ENCODE measurements at regions of chr1 and their contacts with region 1.

Region 1: DNA sequence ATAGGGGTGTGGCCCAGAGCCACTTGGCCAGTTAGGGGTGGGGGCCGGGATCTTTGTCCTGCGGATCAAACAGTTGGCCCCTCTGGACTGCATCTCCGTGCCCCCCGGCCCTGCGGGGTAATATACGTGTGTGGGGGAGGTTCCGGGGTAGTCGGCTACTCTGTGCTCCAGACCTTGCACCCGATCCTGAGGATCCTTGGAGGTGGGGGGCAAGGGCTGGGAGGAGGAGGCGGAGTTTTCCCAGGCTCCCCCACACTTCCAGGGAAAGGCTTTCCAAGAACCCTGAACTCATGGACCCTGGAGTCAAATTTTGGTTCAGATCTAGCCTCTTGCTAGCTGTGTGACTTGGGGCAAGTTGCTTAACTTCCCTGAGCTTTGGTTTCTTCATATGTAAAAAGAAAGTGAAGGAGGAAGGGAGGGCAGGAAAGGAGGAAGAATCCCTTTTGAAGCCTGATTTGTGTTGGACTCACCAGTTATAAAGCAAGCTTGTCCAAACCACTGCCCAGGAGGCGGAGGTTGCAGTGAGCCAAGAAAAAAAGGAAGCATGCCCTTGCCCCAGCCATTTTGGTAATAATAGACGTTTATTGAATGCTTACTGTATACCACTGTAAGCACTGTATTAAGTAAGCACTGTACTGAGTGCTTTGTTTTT is 686 bp downstream of the MIIP start:
- DNase-seq: no peak
- H3K4me3 Mint-ChIP-seq: peak overlapping the region; percentile 78
- H3K27ac Mint-ChIP-seq: peak overlapping the region; percentile 82
- H3K4me1 Mint-ChIP-seq: peaks cover 49% of the 10 kb centered on the region
- H3K27me3 Mint-ChIP-seq: no peaks in the 10 kb centered on the region

Region 2: DNA sequence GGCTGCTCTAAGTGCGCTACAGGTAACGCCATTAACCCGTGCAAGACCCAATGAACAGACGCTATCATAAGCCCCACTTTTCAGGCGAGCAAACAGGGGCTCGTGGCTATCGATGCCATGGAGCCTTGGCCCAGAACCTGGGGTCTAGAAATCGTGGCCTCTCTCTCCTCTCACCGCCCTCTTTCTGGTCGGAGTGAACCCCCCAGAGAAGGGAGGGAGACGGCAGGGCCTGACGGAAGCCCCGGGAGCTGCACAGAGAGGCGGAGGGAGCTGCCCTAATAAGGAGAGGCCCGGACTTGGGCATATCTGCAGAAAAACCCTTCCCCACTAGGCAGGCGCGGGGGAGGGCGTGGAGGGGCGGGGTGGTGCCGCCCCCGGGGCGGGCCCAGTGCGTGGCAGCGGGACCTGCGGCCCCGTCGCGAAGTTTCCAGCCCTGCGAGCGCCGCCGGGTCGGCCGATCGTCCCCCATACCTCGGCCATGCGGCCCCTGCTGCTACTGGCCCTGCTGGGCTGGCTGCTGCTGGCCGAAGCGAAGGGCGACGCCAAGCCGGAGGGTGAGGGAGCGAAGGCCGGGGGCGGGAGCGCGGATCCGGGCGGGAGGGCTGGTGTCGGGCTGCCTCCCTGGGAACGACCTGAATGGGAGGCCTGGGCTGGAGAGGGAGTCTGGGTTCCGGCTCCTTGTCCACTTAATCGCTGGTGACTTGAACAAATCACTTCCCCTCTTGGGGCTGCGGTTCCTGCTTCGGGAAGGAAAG is 85.5 kb before region 1 on chr1 and contains the start of gene PLOD1:
- CTCF ChIA-PET with region 1: no interaction called
- POLR2A ChIA-PET with region 1: no interaction called
- DNase-seq: peak; percentile 91
- H3K4me3 Mint-ChIP-seq: peak within 1 kb of the TSS; percentile 80
- H3K27ac Mint-ChIP-seq: peak within 1 kb of the TSS; percentile 59
- H3K4me1 Mint-ChIP-seq: peaks cover 10% of the 10 kb centered on the region
- H3K27me3 Mint-ChIP-seq: no peaks in the 10 kb centered on the region
- total RNA-seq, gene PLOD1: 15.7 to 16.5 TPM

Region 3: DNA sequence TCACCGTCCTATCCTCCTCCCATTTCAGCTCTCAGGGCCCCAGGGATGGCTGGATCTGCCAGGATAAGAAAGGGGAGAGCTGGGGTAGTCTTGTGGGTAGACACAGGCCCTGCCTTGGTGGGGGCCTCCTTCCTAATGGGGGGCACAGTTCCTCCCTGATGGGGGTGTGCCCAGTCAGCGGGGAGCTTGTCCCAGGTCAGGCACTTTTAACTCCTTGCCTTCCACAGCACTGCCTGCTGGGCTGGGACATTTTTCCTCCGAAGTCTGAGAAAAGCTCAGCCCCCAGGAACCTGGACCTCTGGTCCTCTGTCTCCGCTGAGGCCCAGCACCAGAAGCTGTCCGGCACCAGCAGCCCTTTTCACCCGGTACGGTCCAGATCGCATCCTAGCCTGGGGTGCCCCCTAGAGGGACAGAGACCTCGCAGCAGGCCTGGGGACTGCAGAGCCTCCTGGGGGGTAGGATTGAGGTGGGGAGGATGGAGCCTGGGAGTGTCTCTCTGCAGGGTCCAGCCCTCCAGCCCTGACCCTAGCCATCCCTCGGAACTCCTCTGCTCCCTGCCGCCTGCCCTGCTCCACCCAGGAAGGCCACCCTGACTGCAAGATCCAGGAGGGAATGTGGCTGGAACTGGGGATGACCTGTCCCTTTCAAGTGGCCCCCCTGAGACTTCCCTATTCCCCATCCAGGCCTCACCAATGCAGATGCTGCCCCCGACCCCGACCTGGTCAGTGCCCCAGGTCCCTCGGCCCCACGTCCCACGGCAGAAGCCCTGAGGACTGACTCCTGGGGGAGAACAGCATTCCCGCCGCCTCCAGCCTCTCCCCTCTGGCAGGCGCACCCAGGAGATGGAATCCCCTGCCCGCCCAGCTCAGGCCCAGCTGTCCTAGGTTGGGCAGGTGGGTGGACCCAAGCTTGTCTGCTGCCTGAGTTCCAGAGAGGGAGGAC is 11.3 kb after region 1 on chr1:
- CTCF ChIA-PET with region 1: interaction called, 17 read pairs
- POLR2A ChIA-PET with region 1: interaction called, 19 read pairs
- DNase-seq: peak; percentile 60
- H3K4me3 Mint-ChIP-seq: no peak overlapping the region
- H3K27ac Mint-ChIP-seq: no peak overlapping the region
- H3K4me1 Mint-ChIP-seq: peaks cover 9% of the 10 kb centered on the region
- H3K27me3 Mint-ChIP-seq: no peaks in the 10 kb centered on the region

Region 4: GRCh38 chr1:12052008-12052573 is 32.1 kb after region 1 on chr1:
- CTCF ChIA-PET with region 1: interaction called, 7 read pairs
- POLR2A ChIA-PET with region 1: interaction called, 23 read pairs
- DNase-seq: peak; percentile 76
- H3K4me3 Mint-ChIP-seq: peak overlapping the region; percentile 32
- H3K27ac Mint-ChIP-seq: peak overlapping the region; percentile 78
- H3K4me1 Mint-ChIP-seq: peaks cover 62% of the 10 kb centered on the region
- H3K27me3 Mint-ChIP-seq: no peaks in the 10 kb centered on the region

Region 5: DNA sequence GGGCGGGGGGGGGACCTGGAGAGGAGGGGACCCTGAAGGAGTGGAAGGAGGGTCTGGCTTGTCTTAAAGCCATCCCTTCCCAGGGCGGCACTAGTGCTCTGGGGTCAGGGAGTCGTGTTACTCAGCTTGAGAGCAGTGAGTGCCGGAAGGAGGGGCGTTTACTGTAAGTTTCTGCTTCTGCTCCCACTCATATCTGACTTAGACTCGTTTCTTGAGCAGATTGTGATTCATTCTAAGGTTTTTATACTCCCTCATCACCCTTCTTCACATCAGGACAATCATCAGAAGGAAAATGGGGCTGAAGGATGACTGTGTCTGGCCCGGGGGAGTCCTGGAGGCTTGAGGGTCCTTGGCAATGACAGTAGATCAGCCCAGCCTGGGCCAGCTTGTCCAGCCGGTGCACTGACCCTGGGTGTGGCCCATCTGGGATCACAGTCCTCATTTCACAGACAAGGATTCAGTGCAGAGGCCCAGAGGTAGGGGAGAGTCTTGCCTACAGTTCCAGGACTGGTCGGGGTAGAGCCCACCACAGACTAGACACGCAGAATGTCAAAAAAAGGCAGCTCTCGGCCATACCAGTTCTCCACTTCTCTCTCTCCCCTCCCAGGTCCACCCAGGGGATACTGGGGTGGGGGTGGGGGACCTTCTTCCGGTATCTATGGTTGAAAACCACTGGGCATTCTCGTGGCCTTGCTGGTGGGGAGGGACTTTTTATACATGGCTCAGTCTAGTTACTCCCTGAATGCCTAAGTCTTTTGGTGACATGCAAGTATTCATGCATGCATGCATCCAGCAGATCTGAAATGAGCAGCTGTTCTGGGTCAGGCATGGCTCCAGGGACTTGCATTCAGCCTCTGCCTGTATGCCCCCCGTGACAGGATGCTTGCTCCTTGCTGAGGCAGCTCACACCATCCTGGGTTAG is 48.2 kb after region 1 on chr1:
- CTCF ChIA-PET with region 1: interaction called, 8 read pairs
- POLR2A ChIA-PET with region 1: interaction called, 17 read pairs
- DNase-seq: peak; percentile 72
- H3K4me3 Mint-ChIP-seq: peak overlapping the region; percentile 74
- H3K27ac Mint-ChIP-seq: peak overlapping the region; percentile 96
- H3K4me1 Mint-ChIP-seq: peaks cover 78% of the 10 kb centered on the region
- H3K27me3 Mint-ChIP-seq: peaks cover 2% of the 10 kb centered on the region

Region 6: GRCh38 chr1:12078938-12079861 is 59.2 kb after region 1 on chr1:
- CTCF ChIA-PET with region 1: interaction called, 10 read pairs
- POLR2A ChIA-PET with region 1: interaction called, 10 read pairs
- DNase-seq: peak; percentile 66
- H3K4me3 Mint-ChIP-seq: peak overlapping the region; percentile 56
- H3K27ac Mint-ChIP-seq: peak overlapping the region; percentile 79
- H3K4me1 Mint-ChIP-seq: peaks cover 74% of the 10 kb centered on the region
- H3K27me3 Mint-ChIP-seq: no peaks in the 10 kb centered on the region

Region 7: DNA sequence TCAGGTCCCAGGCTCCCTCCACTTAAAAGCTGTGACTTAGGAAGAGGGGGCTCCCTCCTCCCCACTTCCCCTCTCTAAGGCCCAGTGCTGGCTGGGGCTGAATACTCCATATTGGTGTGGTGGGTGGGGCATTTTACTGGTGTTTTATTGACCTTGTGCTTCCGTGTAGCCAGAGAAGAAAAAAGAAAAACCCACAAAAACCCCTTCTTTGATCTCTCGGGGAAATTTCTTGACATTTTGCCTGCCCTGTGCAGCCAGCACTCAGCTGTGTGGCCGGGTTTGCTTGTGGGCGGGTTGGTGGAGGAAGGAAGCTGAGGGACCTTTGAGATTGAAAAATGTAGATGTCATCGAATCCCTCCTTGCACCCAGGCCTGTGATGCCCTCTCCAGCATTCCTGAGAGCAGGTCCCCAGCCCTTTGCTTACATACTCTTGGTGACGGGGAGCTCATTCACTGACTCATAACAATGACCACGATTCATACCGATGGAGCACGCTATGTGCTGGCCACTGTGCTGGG is 67.9 kb after region 1 on chr1:
- CTCF ChIA-PET with region 1: interaction called, 6 read pairs
- POLR2A ChIA-PET with region 1: interaction called, 13 read pairs
- DNase-seq: peak; percentile 75
- H3K4me3 Mint-ChIP-seq: peak overlapping the region; percentile 43
- H3K27ac Mint-ChIP-seq: peak overlapping the region; percentile 91
- H3K4me1 Mint-ChIP-seq: peaks cover 64% of the 10 kb centered on the region
- H3K27me3 Mint-ChIP-seq: no peaks in the 10 kb centered on the region

Region 8: GRCh38 chr1:12184008-12184681 is 164.2 kb after region 1 on chr1:
- CTCF ChIA-PET with region 1: no interaction called
- POLR2A ChIA-PET with region 1: no interaction called
- DNase-seq: no peak
- H3K4me3 Mint-ChIP-seq: no peak overlapping the region
- H3K27ac Mint-ChIP-seq: no peak overlapping the region
- H3K4me1 Mint-ChIP-seq: peaks cover 60% of the 10 kb centered on the region
- H3K27me3 Mint-ChIP-seq: no peaks in the 10 kb centered on the region